Panc1 (cell line): ENCODE measurements at regions of chr3 and their contacts with region 1.

Region 1: DNA sequence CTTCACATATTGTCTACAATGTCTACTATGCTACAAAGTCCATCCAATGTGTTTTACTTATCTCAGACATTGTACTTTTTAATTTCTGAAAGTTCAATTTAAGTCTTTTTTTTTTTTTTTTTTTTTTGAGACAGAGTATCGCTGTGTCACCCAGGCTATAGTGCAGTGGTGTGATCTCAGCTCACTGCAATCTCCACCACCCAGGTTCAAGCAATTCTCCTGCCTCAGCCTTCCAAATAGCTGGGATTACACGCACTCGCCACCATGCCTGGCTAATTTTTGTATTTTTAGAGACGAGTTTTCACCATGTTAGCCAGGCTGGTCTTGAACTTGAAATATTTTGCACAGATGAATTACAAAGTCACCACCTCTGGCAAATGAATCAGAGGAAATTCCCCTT is 19.2 kb upstream of the RNF7 start:
- DNase-seq: no peak
- ATAC-seq: no peak
- H3K4me3 ChIP-seq: no peak overlapping the region
- H3K27ac ChIP-seq: no peak overlapping the region
- H3K4me1 ChIP-seq: no peaks in the 10 kb centered on the region
- H3K27me3 ChIP-seq: peaks cover 3% of the 10 kb centered on the region; the same call in 1 of the 2 replicates
- CTCF ChIP-seq: no peak

Region 2: GRCh38 chr3:141643391-141643790 is 75.5 kb before region 1 on chr3:
- CTCF ChIA-PET with region 1: no interaction called
- POLR2A ChIA-PET with region 1: interaction called, 14 read pairs
- in situ Hi-C with region 1: no loop called
- intact Hi-C with region 1: no loop called
- DNase-seq: no peak
- ATAC-seq: no peak
- H3K4me3 ChIP-seq: no peak overlapping the region
- H3K27ac ChIP-seq: no peak overlapping the region
- H3K4me1 ChIP-seq: no peaks in the 10 kb centered on the region
- H3K27me3 ChIP-seq: no peaks in the 10 kb centered on the region
- CTCF ChIP-seq: no peak

Region 3: GRCh38 chr3:141729240-141729639 is 10.4 kb after region 1 on chr3:
- CTCF ChIA-PET with region 1: no interaction called
- POLR2A ChIA-PET with region 1: no interaction called
- in situ Hi-C with region 1: no loop called
- intact Hi-C with region 1: no loop called
- DNase-seq: no peak
- ATAC-seq: peak; percentile 34; the same call in 1 of the 2 replicates
- H3K4me3 ChIP-seq: no peak overlapping the region
- H3K27ac ChIP-seq: no peak overlapping the region
- H3K4me1 ChIP-seq: no peaks in the 10 kb centered on the region
- H3K27me3 ChIP-seq: no peaks in the 10 kb centered on the region
- CTCF ChIP-seq: peak; percentile 43

Region 4: DNA sequence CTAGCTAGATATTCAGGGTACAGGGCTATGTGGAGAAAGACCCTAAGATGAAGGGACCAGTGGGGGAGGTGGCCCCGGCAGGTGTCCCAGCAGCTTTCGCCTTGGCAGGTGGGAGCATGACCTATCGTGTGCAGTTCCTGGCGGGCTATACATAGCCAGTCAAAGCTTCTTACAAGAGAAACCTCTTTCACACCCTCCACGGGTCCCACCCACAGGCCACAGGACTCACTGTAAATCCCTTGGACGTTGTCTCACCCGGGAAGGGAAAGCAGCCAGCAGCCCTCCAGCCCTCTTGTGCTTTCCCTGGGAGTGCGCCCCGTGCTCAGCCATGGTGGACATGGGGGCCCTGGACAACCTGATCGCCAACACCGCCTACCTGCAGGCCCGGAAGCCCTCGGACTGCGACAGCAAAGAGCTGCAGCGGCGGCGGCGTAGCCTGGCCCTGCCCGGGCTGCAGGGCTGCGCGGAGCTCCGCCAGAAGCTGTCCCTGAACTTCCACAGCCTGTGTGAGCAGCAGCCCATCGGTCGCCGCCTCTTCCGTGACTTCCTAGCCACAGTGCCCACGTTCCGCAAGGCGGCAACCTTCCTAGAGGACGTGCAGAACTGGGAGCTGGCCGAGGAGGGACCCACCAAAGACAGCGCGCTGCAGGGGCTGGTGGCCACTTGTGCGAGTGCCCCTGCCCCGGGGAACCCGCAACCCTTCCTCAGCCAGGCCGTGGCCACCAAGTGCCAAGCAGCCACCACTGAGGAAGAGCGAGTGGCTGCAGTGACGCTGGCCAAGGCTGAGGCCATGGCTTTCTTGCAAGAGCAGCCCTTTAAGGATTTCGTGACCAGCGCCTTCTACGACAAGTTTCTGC is 59.3 kb after region 1 on chr3:
- CTCF ChIA-PET with region 1: no interaction called
- POLR2A ChIA-PET with region 1: interaction called, 10 read pairs
- in situ Hi-C with region 1: no loop called
- intact Hi-C with region 1: no loop called
- DNase-seq: no peak
- ATAC-seq: peak; percentile 43; the same call in 1 of the 2 replicates
- H3K4me3 ChIP-seq: no peak overlapping the region
- H3K27ac ChIP-seq: no peak overlapping the region
- H3K4me1 ChIP-seq: no peaks in the 10 kb centered on the region
- H3K27me3 ChIP-seq: no peaks in the 10 kb centered on the region
- CTCF ChIP-seq: no peak

Region 5: DNA sequence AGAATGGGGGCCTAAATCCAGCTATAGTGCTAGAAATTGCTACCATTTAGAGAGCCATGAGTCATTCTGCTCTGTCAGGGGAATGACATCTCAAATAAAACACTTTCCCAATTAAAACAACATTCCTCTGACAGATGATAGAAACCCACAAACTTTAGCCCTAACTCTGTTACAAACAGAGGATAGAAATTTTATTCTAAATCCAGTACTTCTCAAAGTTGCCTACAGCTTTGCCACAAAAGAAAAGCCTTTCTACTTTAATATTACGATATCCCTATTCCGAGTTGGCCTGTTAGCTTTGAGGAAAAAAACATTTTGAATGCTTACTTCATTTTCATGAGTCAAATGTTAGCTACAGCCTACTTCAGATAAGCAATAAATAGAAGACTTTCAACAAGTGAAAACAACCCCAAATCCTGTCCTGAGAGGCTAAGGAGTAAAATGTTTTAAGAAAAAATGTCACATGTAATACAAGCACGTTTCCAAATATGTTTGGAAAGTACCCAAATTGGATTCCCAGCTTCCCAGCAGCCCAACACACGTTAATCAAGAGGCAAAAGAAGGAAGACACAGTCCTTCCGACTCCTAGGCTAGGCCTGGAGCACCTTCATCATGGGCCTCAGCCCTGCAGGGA is 241.2 kb after region 1 on chr3:
- CTCF ChIA-PET with region 1: no interaction called
- POLR2A ChIA-PET with region 1: no interaction called
- in situ Hi-C with region 1: no loop called
- intact Hi-C with region 1: no loop called
- DNase-seq: peak; percentile 17
- ATAC-seq: peak; percentile 64
- H3K4me3 ChIP-seq: no peak overlapping the region
- H3K27ac ChIP-seq: peak overlapping the region; percentile 18; the same call in 1 of the 2 replicates
- H3K4me1 ChIP-seq: peaks cover 10% of the 10 kb centered on the region
- H3K27me3 ChIP-seq: no peaks in the 10 kb centered on the region
- CTCF ChIP-seq: no peak